PC-3 (cell line): ENCODE measurements at regions of chr11 and their contacts with region 1.

Region 1: GRCh38 chr11:78000193-78000592 is 5.7 kb upstream of the INTS4 start:
- DNase-seq: peak; percentile 82
- ATAC-seq: peak; percentile 91
- H3K4me3 ChIP-seq: no peak overlapping the region
- H3K27ac ChIP-seq: no peak overlapping the region
- H3K4me1 ChIP-seq: peaks cover 4% of the 10 kb centered on the region; the same call in 1 of the 2 replicates
- H3K27me3 ChIP-seq: no peaks in the 10 kb centered on the region
- CTCF ChIP-seq: peak; percentile 89

Region 2: DNA sequence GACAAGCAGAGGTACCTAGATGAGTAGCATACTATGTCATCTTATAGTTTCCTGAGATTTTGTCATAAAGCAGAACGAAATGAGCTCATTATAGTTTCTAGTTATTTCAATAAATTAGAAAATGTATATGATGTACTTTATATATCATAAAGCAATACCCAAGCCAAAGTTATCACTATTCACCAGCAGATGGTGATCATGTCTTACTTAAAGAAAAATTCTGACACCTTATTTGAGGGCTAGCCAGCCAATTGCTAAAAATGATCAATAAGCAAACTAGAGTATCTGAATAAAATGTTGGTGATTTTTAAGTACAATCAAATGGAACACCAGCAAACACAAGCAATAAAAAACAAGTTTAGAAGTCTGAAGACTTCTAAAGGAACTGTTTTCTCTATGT is 223.7 kb before region 1 on chr11:
- CTCF ChIA-PET with region 1: interaction called, 5 read pairs
- POLR2A ChIA-PET with region 1: no interaction called
- intact Hi-C with region 1: loop called (anchors 1 kb)
- DNase-seq: peak; percentile 56
- ATAC-seq: no peak
- H3K4me3 ChIP-seq: no peak overlapping the region
- H3K27ac ChIP-seq: no peak overlapping the region
- H3K4me1 ChIP-seq: peaks cover 3% of the 10 kb centered on the region; the same call in 1 of the 2 replicates
- H3K27me3 ChIP-seq: no peaks in the 10 kb centered on the region
- CTCF ChIP-seq: peak; percentile 78

Region 3: DNA sequence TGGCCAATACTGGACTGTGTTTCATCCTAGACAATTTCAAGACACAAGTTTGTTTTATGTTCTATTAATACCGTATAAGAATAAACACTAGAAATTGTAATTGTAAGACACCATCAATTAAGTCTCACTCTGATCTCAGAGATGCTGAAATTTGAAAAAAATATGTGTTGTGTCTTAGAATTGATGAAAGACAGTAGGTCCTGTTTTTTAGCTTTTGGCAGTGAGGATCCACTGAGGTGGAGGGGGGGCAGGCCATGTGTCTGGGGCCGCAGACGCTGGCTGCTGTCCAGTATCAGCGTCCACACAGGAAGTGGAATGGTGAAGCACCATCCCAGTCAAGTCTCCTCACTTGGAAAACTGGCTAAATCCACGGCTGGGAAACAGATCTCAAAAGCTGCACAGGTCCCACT is 161.8 kb after region 1 on chr11:
- CTCF ChIA-PET with region 1: no interaction called
- POLR2A ChIA-PET with region 1: no interaction called
- intact Hi-C with region 1: no loop called
- DNase-seq: no peak
- ATAC-seq: no peak
- H3K4me3 ChIP-seq: no peak overlapping the region
- H3K27ac ChIP-seq: no peak overlapping the region
- H3K4me1 ChIP-seq: no peaks in the 10 kb centered on the region
- H3K27me3 ChIP-seq: no peaks in the 10 kb centered on the region
- CTCF ChIP-seq: no peak

Region 4: DNA sequence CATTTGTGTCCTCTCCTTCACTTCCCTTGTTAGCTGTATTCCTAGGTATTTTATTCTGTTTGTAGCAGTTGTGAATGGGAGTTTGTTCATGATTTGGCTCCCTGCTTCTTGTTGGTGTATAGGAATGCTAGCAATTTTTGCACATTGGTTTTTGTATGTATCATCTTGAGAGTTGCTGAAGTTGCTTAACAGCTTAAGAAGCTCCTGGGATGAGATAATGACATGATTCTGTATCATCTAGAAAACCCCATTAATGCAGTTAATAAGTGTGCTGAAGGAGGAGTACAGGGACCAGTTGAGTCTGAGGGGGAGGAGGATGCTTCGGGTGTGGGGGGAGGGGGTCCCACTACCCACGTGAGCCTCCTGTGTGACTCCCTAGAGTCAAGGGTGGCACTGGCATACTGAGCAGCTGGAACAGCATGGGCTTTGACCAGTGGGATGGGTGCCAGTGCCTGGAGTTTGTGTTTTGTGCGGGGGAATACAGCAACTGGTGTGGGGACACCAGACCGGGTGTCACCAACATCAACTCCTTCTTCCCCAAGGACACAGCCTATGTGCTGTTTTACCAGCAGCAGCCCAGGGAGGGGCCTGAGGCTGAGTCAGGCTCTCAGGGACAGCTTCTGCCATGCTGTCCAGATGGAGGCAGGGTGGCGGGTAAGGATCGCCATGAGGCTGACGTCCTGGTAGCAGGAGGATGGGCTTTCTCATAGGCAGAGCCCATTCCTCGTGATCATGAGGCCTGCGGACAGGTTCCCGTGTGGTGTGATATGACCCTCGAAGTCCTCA is 212.6 kb after region 1 on chr11:
- CTCF ChIA-PET with region 1: no interaction called
- POLR2A ChIA-PET with region 1: no interaction called
- intact Hi-C with region 1: no loop called
- DNase-seq: no peak
- ATAC-seq: no peak
- H3K4me3 ChIP-seq: no peak overlapping the region
- H3K27ac ChIP-seq: no peak overlapping the region
- H3K4me1 ChIP-seq: peaks cover 11% of the 10 kb centered on the region
- H3K27me3 ChIP-seq: no peaks in the 10 kb centered on the region
- CTCF ChIP-seq: no peak